Dendritic cell treated with granulocyte-macrophage colony-stimulating factor and Interleukin-4, amounts not matched to agents 40 ng/mL and 50 ng/mL, for 4 days (primary cell): ENCODE measurements at regions of chr17 and their contacts with region 1.

Region 1: DNA sequence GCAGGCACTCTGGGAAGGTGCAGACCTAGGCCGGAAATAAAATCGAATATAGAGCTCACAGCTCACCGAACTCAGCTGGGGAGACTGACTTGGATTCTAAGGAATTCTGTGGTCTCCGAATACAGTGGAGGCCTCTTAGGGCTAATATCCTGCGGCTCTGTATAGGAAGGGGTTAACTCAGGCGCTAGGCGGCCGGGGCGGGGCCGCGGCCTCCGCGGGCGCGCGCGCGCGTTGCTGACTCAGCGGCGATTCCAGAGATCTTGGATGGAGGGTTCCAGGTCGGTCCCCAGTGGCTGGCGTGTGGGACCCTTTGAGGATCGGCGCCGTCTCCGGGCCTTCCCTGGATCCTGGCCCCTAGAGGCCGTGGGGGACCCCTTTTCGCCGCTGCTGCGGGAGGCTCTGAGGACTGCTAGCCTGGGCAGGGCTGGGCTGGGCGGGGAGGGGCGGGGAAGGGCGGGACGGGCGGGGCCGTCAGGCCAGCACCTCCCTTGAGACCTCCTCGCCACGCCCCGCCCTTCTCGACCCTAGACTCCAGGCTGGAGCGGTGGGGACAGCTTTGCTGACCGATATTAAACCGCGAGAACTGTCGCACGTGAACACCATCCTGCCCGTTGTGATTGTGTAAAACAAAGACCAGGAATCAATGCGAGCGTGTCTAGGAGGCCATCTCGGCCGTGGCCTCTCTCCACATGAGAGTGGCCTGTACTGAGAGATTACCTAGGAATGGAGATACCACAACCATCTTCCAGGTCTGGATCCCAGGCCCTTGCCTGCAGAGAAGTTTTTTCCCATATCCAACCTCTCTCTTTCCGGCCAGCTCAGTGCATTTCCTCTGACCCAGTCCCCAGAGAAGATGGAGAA is 1.4 kb upstream of the PLEKHH3 start:
- H3K4me3 Mint-ChIP-seq: peak overlapping the region; percentile 84
- H3K27ac Mint-ChIP-seq: peak overlapping the region; percentile 95
- H3K4me1 Mint-ChIP-seq: peaks cover 69% of the 10 kb centered on the region
- H3K27me3 Mint-ChIP-seq: peaks cover 66% of the 10 kb centered on the region

Region 2: GRCh38 chr17:42591411-42591810 is 86.7 kb before region 1 on chr17:
- intact Hi-C with region 1: no loop called
- H3K4me3 Mint-ChIP-seq: no peak overlapping the region
- H3K27ac Mint-ChIP-seq: no peak overlapping the region
- H3K4me1 Mint-ChIP-seq: peaks cover 8% of the 10 kb centered on the region
- H3K27me3 Mint-ChIP-seq: no peaks in the 10 kb centered on the region

Region 3: DNA sequence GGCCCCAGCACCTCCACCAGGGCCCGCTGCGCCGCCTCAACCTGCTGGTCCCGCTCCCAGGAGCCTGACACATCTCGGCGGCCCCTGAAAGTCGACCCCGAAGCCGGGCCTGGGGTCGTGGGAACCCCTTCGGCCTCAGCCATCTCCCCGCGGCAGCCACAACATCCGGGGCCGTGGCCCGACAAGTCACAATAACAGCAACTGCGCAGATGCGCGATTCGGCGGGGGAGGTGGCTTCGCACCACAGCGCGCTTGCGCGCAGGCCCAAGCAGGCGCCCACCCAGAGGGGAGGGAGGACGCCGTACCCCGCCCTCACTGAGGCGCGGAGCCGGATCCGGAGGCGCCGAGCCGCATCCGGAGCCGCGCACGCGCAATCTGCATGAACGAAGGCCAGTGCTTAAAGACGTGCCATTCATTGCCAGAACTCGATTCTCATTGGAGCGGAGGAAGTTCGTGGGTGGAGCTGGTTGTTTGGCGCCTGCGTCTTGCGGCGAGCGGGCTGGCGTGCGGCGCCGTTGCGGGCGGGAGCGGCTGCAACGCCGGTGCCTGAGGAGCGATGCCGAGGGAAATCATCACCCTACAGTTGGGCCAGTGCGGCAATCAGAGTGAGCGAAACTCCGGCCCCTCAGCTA is 68.9 kb before region 1 on chr17 and contains the starts of genes RETREG3 and TUBG1:
- intact Hi-C with region 1: loop called (anchors 1 kb)
- H3K4me3 Mint-ChIP-seq: peak within 1 kb of the TSS; percentile 99
- H3K27ac Mint-ChIP-seq: peak within 1 kb of the TSS; percentile 90
- H3K4me1 Mint-ChIP-seq: peaks cover 26% of the 10 kb centered on the region
- H3K27me3 Mint-ChIP-seq: no peaks in the 10 kb centered on the region